Posterior cingulate gyrus (tissue), 11 donors: ENCODE measurements at regions of chr1 and their contacts with region 1.

Region 1: GRCh38 chr1:60969971-60970509 is 112.3 kb upstream of the NFIA start:
- DNase-seq: no peak

Region 2: GRCh38 chr1:61043010-61043820 is 73.2 kb after region 1 on chr1:
- intact Hi-C with region 1: loop called (anchors 1 kb)
- DNase-seq: peak; percentile 63 to 97 (median 87)

Region 3: GRCh38 chr1:61453111-61453961 is 483.3 kb after region 1 on chr1:
- intact Hi-C with region 1: loop called (anchors 2 kb)
- DNase-seq: peak; percentile 68 to 96 (median 82)